Esophagus muscularis mucosa (tissue), 4 donors: ENCODE measurements at regions of chr13 and their contacts with region 1.

Region 1: DNA sequence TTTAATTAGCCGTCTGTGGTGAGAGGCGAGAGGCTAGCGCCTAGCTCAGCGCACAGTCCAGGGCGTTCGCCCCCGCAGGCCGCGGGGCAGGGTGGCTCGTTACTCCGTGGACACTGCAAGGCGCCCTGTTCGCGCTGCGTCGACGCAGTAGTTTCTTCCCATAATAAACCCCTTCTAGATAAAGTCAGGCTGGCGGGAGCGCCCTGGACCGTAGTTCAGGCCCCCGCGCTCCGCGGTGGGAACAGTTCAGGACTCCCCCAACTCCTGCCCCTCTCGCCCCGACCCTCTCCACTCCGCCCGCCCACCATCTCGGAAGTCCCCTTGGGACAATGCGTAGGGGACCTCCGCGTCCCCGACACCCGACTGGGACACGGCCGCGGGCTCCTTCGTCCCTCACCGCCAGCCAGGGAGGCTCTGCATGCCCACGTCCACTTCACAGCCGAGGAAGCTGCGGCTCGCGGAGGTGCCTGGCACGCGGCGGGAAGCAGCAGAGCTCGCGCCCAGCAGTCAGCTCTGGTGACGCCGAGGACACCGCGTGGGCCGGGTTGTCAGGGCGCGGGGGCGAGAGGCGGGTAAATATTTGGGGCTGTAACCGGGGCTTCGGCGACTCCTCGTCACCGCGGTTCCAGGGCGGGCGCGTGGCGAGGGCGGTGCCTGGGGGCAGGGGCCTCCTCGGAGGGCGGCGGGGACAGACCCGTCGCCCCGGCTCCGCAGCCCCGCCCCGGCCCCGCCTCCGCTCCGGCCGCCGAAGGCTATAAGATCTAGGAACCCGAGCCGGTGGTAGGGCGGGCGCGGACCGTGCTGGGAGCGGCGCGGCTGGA is at the start of gene RGCC:
- DNase-seq: no peak
- H3K4me3 ChIP-seq: peak within 1 kb of the TSS; percentile 65 to 69 (median 66)
- H3K27ac ChIP-seq: peak within 1 kb of the TSS; percentile 57 to 74 (median 68)
- H3K4me1 ChIP-seq: peaks cover 12 to 40% (median 33%) of the 10 kb centered on the region in 4 donors
- H3K27me3 ChIP-seq: peaks cover 0 to 48% (median 4%) of the 10 kb centered on the region in 4 donors
- CTCF ChIP-seq: no peak
- EP300 ChIP-seq: no peak
- POLR2A ChIP-seq: no peak
- total RNA-seq, gene RGCC: 56.5 to 142 (median 77.1) TPM

Region 2: GRCh38 chr13:41244556-41244955 is 212.4 kb before region 1 on chr13:
- intact Hi-C with region 1: no loop called
- DNase-seq: no peak
- H3K4me3 ChIP-seq: no peak overlapping the region
- H3K27ac ChIP-seq: peak overlapping the region in 2 of 4 donors; percentile 34 to 49
- H3K4me1 ChIP-seq: peaks cover 5 to 28% (median 14%) of the 10 kb centered on the region in 4 donors
- H3K27me3 ChIP-seq: no peaks in the 10 kb centered on the region
- CTCF ChIP-seq: no peak
- EP300 ChIP-seq: no peak
- POLR2A ChIP-seq: no peak

Region 3: GRCh38 chr13:41565221-41565620 is 108.2 kb after region 1 on chr13:
- intact Hi-C with region 1: no loop called
- DNase-seq: no peak
- H3K4me3 ChIP-seq: no peak overlapping the region
- H3K27ac ChIP-seq: no peak overlapping the region
- H3K4me1 ChIP-seq: peaks cover 18 to 33% (median 32%) of the 10 kb centered on the region in 4 donors
- H3K27me3 ChIP-seq: no peaks in the 10 kb centered on the region
- CTCF ChIP-seq: no peak
- EP300 ChIP-seq: no peak
- POLR2A ChIP-seq: no peak

Region 4: GRCh38 chr13:41652727-41653361 is 195.9 kb after region 1 on chr13:
- intact Hi-C with region 1: loop called (anchors 10 kb)
- DNase-seq: no peak
- H3K4me3 ChIP-seq: no peak overlapping the region
- H3K27ac ChIP-seq: peak overlapping the region; percentile 14 to 47 (median 35)
- H3K4me1 ChIP-seq: peaks cover 17 to 34% (median 28%) of the 10 kb centered on the region in 4 donors
- H3K27me3 ChIP-seq: no peaks in the 10 kb centered on the region
- CTCF ChIP-seq: peak; percentile 62 to 65 (median 63)
- EP300 ChIP-seq: no peak
- POLR2A ChIP-seq: no peak

Region 5: DNA sequence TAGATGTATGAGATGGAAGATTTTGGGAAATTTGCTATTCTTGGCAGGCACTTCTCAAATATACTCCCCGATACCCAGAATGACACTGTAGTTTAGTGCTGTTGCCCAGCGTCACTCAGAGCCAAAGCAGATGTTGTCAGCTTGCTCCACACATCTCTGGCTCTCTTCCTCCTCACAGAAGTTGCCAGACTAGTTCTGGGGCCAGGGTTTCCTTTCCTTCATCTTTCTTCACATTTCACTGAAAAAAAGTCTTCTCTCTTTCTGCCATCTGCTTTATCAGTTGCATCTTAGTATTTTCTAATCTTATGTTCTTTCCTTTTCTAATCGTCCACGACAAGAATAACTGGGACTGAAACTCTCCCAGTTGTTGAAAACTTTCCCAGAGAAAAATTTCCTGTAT is 251.7 kb after region 1 on chr13:
- intact Hi-C with region 1: no loop called
- DNase-seq: no peak
- H3K4me3 ChIP-seq: no peak overlapping the region
- H3K27ac ChIP-seq: peak overlapping the region in 2 of 4 donors; percentile 19 to 20
- H3K4me1 ChIP-seq: peaks cover 28 to 41% (median 35%) of the 10 kb centered on the region in 4 donors
- H3K27me3 ChIP-seq: no peaks in the 10 kb centered on the region
- CTCF ChIP-seq: no peak
- EP300 ChIP-seq: no peak
- POLR2A ChIP-seq: no peak